ENCODE measurements at regions of chr18 and their contacts with region 1.

Region 1: GRCh38 chr18:7177116-7177744 is 53.7 kb upstream of the LRRC30 start:
- DNase-seq: peak; percentile 15
- ATAC-seq: peak; percentile 81; the same call in 1 of the 2 replicates
- H3K4me3 ChIP-seq: no peak overlapping the region
- H3K27ac ChIP-seq: no peak overlapping the region
- H3K4me1 ChIP-seq: no peaks in the 10 kb centered on the region
- H3K27me3 ChIP-seq: no peaks in the 10 kb centered on the region; the same call in 1 of the 2 replicates
- CTCF ChIP-seq: peak; percentile 78

Region 2: GRCh38 chr18:7038330-7038851 is 138.8 kb before region 1 on chr18:
- CTCF ChIA-PET with region 1: interaction called, 9 read pairs
- POLR2A ChIA-PET with region 1: no interaction called
- in situ Hi-C with region 1: no loop called
- intact Hi-C with region 1: loop called (anchors 10 kb)
- DNase-seq: peak; percentile 5
- ATAC-seq: 0 out of 2 replicates have a peak, but pooled peaks have one; percentile 56
- H3K4me3 ChIP-seq: no peak overlapping the region
- H3K27ac ChIP-seq: no peak overlapping the region
- H3K4me1 ChIP-seq: no peaks in the 10 kb centered on the region
- H3K27me3 ChIP-seq: no peaks in the 10 kb centered on the region
- CTCF ChIP-seq: peak; percentile 65